Common myeloid progenitor, CD34-positive (primary cell): ENCODE measurements at regions of chr5 and their contacts with region 1.

Region 1: DNA sequence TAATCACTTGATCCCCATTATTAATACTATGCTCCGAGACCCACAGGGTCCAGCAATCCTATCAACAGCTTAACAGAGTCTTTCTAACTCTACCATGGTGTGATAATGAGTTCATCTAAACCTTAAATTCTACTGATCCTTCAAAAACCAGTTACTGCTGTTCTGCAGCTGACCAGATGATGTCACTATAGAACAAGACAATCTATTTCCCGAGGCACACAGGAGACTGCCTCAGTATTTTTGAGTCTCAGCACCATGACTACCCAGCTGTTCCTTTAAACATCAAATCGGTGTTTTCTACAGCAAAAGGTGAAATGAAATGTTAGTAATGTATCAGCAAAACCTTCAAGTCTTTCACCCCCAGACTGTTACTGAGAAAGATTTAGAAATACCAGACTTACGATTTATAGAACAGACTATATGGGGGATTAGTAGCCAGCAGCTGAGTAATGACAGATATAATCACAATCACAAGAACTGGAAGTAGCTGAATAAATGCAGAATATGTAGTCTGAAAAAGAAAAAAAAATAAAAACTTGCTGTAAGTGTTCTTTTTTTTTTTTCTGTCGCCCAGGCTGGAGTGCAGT is 16.9 kb downstream of the DNAJC18 start:
- DNase-seq: peak; percentile 77 to 90 (median 88)
- H3K4me3 ChIP-seq: no peak overlapping the region
- H3K27ac ChIP-seq: no peak overlapping the region
- H3K4me1 ChIP-seq: peaks cover 0 to 28% (median 22%) of the 10 kb centered on the region in 4 experiments
- H3K27me3 ChIP-seq: no peaks in the 10 kb centered on the region

Region 2: GRCh38 chr5:139439013-139439903 is 16.9 kb after region 1 on chr5 and contains the start of gene DNAJC18:
- CTCF ChIA-PET with region 1: interaction called, 64 read pairs
- POLR2A ChIA-PET with region 1: interaction called, 3 read pairs
- DNase-seq: peak; percentile 86 to 91 (median 89)
- H3K4me3 ChIP-seq: peak within 1 kb of the TSS; percentile 71 to 91 (median 85)
- H3K27ac ChIP-seq: peak within 1 kb of the TSS; percentile 81 to 91
- H3K4me1 ChIP-seq: peaks cover 8 to 38% (median 33%) of the 10 kb centered on the region in 4 experiments
- H3K27me3 ChIP-seq: no peaks in the 10 kb centered on the region

Region 3: GRCh38 chr5:139474890-139475791 is 52.7 kb after region 1 on chr5:
- CTCF ChIA-PET with region 1: interaction called, 44 read pairs
- POLR2A ChIA-PET with region 1: interaction called, 3 read pairs
- DNase-seq: peak; percentile 84 to 96 (median 95)
- H3K4me3 ChIP-seq: peak overlapping the region in 4 of 7 experiments; percentile 21 to 50 (median 38)
- H3K27ac ChIP-seq: peak overlapping the region; percentile 71 to 84
- H3K4me1 ChIP-seq: peaks cover 10 to 96% (median 92%) of the 10 kb centered on the region in 4 experiments
- H3K27me3 ChIP-seq: no peaks in the 10 kb centered on the region

Region 4: DNA sequence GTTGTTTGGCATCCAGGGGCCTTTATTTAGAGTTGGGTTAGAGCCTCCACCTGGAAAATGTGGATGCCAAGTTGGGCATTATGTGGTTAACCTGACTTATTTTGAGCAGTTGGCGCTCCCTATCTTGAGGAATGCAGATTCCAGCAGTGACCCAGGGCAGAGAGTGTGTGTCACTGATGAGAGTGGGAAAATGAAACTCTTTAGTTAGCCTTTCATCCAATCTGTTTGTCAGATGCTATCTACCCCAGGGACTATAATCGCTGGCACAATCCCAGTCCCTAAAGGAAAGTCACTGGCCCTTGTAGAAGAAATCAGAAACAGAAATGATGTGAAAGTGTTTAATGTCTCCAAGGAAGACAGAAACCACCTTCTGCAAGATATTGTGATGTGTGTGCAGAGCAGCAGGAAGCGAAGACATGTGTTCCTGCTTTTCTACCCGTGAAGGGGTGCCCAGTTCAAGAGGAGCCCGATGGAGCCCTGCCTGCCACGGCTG is 70.3 kb after region 1 on chr5:
- CTCF ChIA-PET with region 1: interaction called, 11 read pairs
- POLR2A ChIA-PET with region 1: no interaction called
- DNase-seq: peak in 2 of 3 donors; percentile 55 to 64
- H3K4me3 ChIP-seq: peak overlapping the region in 4 of 7 experiments; percentile 1 to 37 (median 16)
- H3K27ac ChIP-seq: no peak overlapping the region
- H3K4me1 ChIP-seq: peaks cover 8 to 39% (median 24%) of the 10 kb centered on the region in 4 experiments
- H3K27me3 ChIP-seq: no peaks in the 10 kb centered on the region

Region 5: GRCh38 chr5:139822553-139823425 is 400.4 kb after region 1 on chr5:
- CTCF ChIA-PET with region 1: no interaction called
- POLR2A ChIA-PET with region 1: no interaction called
- DNase-seq: no peak
- H3K4me3 ChIP-seq: no peak overlapping the region
- H3K27ac ChIP-seq: no peak overlapping the region
- H3K4me1 ChIP-seq: no peaks in the 10 kb centered on the region
- H3K27me3 ChIP-seq: peaks cover 0 to 19% (median 0%) of the 10 kb centered on the region in 5 experiments